ENCODE measurements at regions of chr17 and their contacts with region 1.

Region 1: DNA sequence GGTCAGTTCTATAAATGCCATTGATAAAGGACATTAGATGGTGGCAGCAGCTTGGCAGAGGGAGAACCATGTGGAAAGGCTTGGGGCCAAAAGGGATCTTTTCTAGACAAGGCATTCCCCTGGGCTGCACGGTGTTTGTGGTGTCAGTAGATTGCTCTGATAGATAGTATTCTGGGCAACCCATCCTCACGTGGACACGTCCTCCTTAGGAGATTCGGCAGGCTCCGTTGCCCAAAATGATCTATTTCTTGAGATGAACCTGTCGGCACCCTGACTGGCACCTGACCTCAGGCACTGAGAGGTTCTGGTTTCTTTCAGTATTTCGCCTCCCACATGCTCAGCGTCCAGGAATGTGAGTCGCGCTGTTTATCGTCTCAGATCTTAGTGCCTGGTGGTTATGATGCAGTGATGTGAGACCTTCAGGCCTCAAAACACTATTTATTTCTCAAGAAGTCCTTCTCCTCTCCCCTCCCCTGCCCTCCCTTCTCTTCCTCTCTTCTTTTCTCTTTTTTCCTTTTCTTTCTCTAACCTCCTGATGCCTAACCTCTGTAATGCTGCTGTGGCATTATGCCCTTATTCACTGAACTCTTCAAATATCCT is 89.6 kb downstream of the MARCHF10 start:
- DNase-seq: peak; percentile 68 to 73
- H3K4me3 ChIP-seq: no peak overlapping the region
- H3K27ac ChIP-seq: peak overlapping the region; percentile 48
- H3K4me1 ChIP-seq: peaks cover 29% of the 10 kb centered on the region
- H3K27me3 ChIP-seq: no peaks in the 10 kb centered on the region
- CTCF ChIP-seq: no peak

Region 2: GRCh38 chr17:62692721-62693483 is 25.6 kb before region 1 on chr17:
- CTCF ChIA-PET with region 1: no interaction called
- POLR2A ChIA-PET with region 1: no interaction called
- intact Hi-C with region 1: no loop called
- DNase-seq: no peak
- H3K4me3 ChIP-seq: no peak overlapping the region
- H3K27ac ChIP-seq: no peak overlapping the region
- H3K4me1 ChIP-seq: peaks cover 14% of the 10 kb centered on the region
- H3K27me3 ChIP-seq: no peaks in the 10 kb centered on the region
- CTCF ChIP-seq: peak; percentile 56; the same call in 1 of the 2 replicates

Region 3: GRCh38 chr17:62761917-62762316 is 43.5 kb after region 1 on chr17:
- CTCF ChIA-PET with region 1: interaction called, 7 read pairs
- POLR2A ChIA-PET with region 1: interaction called, 3 read pairs
- intact Hi-C with region 1: loop called (anchors 5 kb)
- DNase-seq: peak; percentile 82 to 96
- H3K4me3 ChIP-seq: no peak overlapping the region
- H3K27ac ChIP-seq: peak overlapping the region; percentile 54
- H3K4me1 ChIP-seq: peaks cover 48% of the 10 kb centered on the region
- H3K27me3 ChIP-seq: no peaks in the 10 kb centered on the region
- CTCF ChIP-seq: no peak

Region 4: GRCh38 chr17:62778689-62779681 is 60.5 kb after region 1 on chr17:
- CTCF ChIA-PET with region 1: no interaction called
- POLR2A ChIA-PET with region 1: no interaction called
- intact Hi-C with region 1: loop called (anchors 5 kb)
- DNase-seq: peak; percentile 89 to 98
- H3K4me3 ChIP-seq: peak overlapping the region; percentile 22; the same call in 1 of the 2 replicates
- H3K27ac ChIP-seq: peak overlapping the region; percentile 98
- H3K4me1 ChIP-seq: peaks cover 55% of the 10 kb centered on the region
- H3K27me3 ChIP-seq: no peaks in the 10 kb centered on the region
- CTCF ChIP-seq: no peak

Region 5: GRCh38 chr17:62791751-62792445 is 73.4 kb after region 1 on chr17:
- CTCF ChIA-PET with region 1: no interaction called
- POLR2A ChIA-PET with region 1: no interaction called
- intact Hi-C with region 1: loop called (anchors 2 kb)
- DNase-seq: peak; percentile 67 to 98
- H3K4me3 ChIP-seq: peak overlapping the region; percentile 21; the same call in 1 of the 2 replicates
- H3K27ac ChIP-seq: peak overlapping the region; percentile 94
- H3K4me1 ChIP-seq: peaks cover 47% of the 10 kb centered on the region
- H3K27me3 ChIP-seq: no peaks in the 10 kb centered on the region
- CTCF ChIP-seq: no peak

Region 6: GRCh38 chr17:62870030-62870541 is 151.6 kb after region 1 on chr17:
- CTCF ChIA-PET with region 1: no interaction called
- POLR2A ChIA-PET with region 1: no interaction called
- intact Hi-C with region 1: no loop called
- DNase-seq: peak; percentile 25 to 72
- H3K4me3 ChIP-seq: no peak overlapping the region
- H3K27ac ChIP-seq: no peak overlapping the region
- H3K4me1 ChIP-seq: peaks cover 7% of the 10 kb centered on the region
- H3K27me3 ChIP-seq: no peaks in the 10 kb centered on the region
- CTCF ChIP-seq: no peak

Measured in PC-9 (cell line).